ENCODE measurements at regions of chr5 and their contacts with region 1.

Region 1: DNA sequence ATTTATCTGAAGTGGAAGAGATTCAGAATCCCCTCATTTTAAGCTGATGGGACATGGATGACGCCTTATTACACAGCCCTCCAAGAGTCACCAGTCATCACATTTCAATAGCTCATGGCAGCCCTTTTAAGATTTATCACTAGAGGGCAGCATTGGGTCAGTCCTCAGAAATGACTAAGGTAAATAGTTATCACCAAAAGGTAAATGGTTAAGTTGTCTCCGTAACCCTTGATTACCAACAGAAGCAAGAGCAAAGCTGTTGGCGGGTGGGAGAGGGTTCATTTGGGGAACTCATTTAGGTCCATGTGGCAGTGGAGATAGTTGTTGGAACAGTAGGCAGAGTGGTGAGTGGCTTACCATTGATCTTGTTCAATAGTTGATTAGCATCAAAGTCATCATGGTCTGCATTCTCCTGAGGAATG is 12.0 kb upstream of the C9 start:
- DNase-seq: peak; percentile 35
- CTCF ChIP-seq: peak; percentile 56

Region 2: GRCh38 chr5:39547553-39548154 is 171.3 kb after region 1 on chr5:
- in situ Hi-C with region 1: loop called (anchors 10 kb)
- DNase-seq: peak; percentile 23
- CTCF ChIP-seq: peak; percentile 23

Region 3: GRCh38 chr5:39578887-39579497 is 202.7 kb after region 1 on chr5:
- in situ Hi-C with region 1: no loop called
- DNase-seq: no peak
- CTCF ChIP-seq: peak; percentile 39